PC-9 (cell line): ENCODE measurements at regions of chr9 and their contacts with region 1.

Region 1: GRCh38 chr9:127802576-127803443 is at the start of gene FPGS:
- DNase-seq: peak; percentile 66 to 90
- H3K4me3 ChIP-seq: peak within 1 kb of the TSS; percentile 86
- H3K27ac ChIP-seq: peak within 1 kb of the TSS; percentile 96
- H3K4me1 ChIP-seq: peaks cover 48% of the 10 kb centered on the region
- H3K27me3 ChIP-seq: no peaks in the 10 kb centered on the region
- CTCF ChIP-seq: no peak
- total RNA-seq, gene FPGS: 152 and 191 TPM in 2 replicates

Region 2: DNA sequence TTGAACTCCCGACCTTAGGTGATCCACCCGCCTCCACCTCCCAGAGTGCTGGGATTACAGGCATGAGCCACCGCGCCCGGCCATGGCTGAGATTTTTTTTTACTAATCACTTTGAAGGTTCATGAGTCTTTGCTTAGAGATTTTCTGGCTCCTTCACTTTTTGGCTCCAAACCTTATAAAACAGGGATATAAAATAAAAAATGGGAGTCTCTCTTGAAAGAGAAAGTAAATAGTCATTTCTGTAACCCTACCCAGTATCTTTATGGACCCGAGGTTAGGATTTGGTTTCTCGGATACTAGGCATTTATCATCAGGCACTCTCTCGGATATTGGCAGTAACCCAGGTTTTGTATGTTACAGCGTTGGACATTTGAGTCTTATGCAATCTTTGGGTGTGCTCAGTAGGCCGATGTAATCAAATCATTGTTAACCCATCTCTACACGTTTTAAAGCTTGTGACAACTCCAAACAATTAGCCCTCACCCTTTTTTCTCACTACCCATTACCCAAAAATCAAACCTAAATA is 165.4 kb before region 1 on chr9:
- CTCF ChIA-PET with region 1: no interaction called
- POLR2A ChIA-PET with region 1: no interaction called
- intact Hi-C with region 1: no loop called
- DNase-seq: no peak
- H3K4me3 ChIP-seq: no peak overlapping the region
- H3K27ac ChIP-seq: no peak overlapping the region
- H3K4me1 ChIP-seq: no peaks in the 10 kb centered on the region
- H3K27me3 ChIP-seq: no peaks in the 10 kb centered on the region
- CTCF ChIP-seq: no peak

Region 3: DNA sequence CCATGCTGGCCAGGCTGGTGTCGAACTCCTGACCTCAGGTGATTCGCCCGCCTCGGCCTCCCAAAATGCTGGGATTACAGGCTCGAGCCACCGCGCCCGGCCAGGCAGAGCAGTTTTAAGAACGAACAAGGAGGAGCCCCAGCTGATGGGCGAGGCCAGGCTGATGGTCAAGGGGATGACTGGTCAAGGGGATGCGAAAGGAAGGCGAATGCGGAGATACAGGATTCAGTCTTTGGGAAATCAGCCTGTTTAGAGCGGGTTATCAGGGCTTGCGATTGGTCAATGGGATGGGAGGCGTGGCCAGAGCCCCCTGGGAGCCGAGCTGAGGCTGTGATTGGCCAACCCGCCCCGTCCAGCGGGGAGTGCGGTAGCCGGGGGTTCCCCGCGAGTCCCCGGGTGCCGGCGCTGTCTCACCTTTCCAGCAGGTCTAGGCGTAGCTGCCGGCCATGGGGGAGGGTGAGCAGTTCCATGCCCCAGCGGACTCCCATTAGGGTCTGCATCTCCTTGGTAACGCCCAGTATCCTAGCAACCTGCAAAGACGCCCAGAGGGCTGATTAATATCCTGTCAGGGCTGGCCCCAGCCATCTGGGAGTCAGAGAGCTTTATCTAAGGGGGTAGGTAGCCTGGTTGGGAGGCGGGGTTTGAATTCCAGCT is 60.2 kb before region 1 on chr9:
- CTCF ChIA-PET with region 1: no interaction called
- POLR2A ChIA-PET with region 1: interaction called, 5 read pairs
- intact Hi-C with region 1: loop called (anchors 5 kb)
- DNase-seq: peak; percentile 49 to 68
- H3K4me3 ChIP-seq: no peak overlapping the region
- H3K27ac ChIP-seq: no peak overlapping the region
- H3K4me1 ChIP-seq: peaks cover 24% of the 10 kb centered on the region
- H3K27me3 ChIP-seq: peaks cover 13% of the 10 kb centered on the region; the same call in 1 of the 2 replicates
- CTCF ChIP-seq: no peak

Region 4: DNA sequence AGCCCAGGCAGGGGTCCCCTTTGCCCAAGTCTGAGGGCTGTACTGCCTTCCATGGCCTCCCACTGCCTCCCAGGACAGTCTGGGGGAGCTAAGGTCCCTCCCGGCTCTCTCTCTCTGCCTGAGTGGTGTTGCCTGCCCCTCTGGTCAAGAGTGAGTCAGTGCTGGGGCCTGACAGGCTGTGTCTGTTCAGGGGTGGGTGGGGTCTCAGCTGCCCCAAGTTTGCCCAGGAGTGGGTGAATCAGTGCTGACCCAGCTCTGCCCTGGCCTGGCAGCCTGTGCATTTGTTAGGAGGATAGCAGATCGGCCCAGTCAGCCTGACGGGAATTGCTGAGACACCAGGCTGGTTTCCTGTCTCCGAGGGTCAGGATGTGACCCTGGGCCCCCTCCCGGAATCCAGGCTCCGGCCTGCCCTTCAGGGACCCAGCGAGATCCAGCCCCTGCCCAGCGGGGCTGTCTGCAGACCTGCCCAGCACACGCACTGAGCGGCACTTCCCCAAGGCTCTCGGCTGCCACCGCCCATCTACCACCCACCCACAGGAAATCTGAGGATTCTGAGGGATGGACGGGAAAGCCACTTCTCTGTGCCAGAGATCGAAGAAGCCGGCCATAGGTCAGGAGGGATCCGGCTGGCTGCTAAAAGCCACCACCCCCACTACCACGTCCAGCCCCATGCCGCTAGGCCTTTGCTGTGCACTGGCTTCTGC is 35.7 kb after region 1 on chr9:
- CTCF ChIA-PET with region 1: no interaction called
- POLR2A ChIA-PET with region 1: no interaction called
- intact Hi-C with region 1: loop called (anchors 1 kb)
- DNase-seq: peak; percentile 78 to 88
- H3K4me3 ChIP-seq: peak overlapping the region; percentile 47; the same call in 1 of the 2 replicates
- H3K27ac ChIP-seq: peak overlapping the region; percentile 76
- H3K4me1 ChIP-seq: peaks cover 25% of the 10 kb centered on the region
- H3K27me3 ChIP-seq: no peaks in the 10 kb centered on the region
- CTCF ChIP-seq: no peak

Region 5: GRCh38 chr9:127869310-127870152 is 66.7 kb after region 1 on chr9:
- CTCF ChIA-PET with region 1: interaction called, 6 read pairs
- POLR2A ChIA-PET with region 1: no interaction called
- intact Hi-C with region 1: loop called (anchors 5 kb)
- DNase-seq: peak; percentile 64 to 94
- H3K4me3 ChIP-seq: no peak overlapping the region
- H3K27ac ChIP-seq: no peak overlapping the region
- H3K4me1 ChIP-seq: peaks cover 4% of the 10 kb centered on the region; the same call in 1 of the 2 replicates
- H3K27me3 ChIP-seq: no peaks in the 10 kb centered on the region
- CTCF ChIP-seq: peak; percentile 91

Region 6: DNA sequence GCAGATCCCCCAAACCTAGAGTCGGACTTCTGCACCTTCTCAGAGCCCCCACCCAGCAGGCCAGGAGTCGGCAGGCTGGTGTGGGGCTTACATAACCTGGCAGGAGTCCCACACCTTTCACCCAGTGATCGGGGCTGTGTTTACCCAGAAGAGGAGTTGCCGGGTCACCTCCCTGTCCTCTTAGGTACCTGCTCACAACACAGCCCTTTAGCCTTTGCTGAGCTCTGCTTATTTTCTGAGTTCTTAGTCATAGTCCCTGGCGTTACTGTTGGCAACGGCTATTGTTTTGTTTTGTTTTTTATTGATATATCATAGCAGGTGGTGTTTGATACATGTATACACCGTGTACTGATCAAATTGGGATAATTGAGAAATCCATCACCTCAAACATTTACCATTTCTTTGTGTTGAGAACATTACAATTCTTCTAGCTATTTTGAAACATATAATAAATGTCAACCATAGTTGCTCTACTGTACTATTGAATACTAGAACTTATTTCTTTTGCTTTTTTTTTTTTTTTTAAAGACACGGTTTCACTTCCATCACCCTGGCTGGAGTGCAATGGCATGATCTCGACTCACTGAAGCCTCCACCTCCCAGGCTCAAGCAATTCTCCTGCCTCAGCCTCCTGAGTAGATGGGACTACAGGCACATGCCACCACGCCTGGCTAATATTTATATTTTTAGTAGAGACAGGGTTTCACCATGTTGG is 188.4 kb after region 1 on chr9:
- CTCF ChIA-PET with region 1: no interaction called
- POLR2A ChIA-PET with region 1: interaction called, 15 read pairs
- intact Hi-C with region 1: no loop called
- DNase-seq: peak; percentile 81 to 92
- H3K4me3 ChIP-seq: no peak overlapping the region
- H3K27ac ChIP-seq: peak overlapping the region; percentile 79
- H3K4me1 ChIP-seq: peaks cover 47% of the 10 kb centered on the region
- H3K27me3 ChIP-seq: no peaks in the 10 kb centered on the region
- CTCF ChIP-seq: no peak